ENCODE measurements at regions of chr1 and their contacts with region 1.

Region 1: GRCh38 chr1:186375088-186375953 is at the starts of genes ODR4 and TPR:
- DNase-seq: peak; percentile 100
- H3K4me3 Mint-ChIP-seq: peak within 1 kb of the TSS; percentile 96
- H3K27ac Mint-ChIP-seq: peak within 1 kb of the TSS; percentile 100
- H3K4me1 Mint-ChIP-seq: peaks cover 22% of the 10 kb centered on the region
- H3K27me3 Mint-ChIP-seq: no peaks in the 10 kb centered on the region
- CTCF ChIP-seq: peak; percentile 96
- total RNA-seq, gene ODR4: 36.9 and 39.9 TPM in 2 replicates
- total RNA-seq, gene TPR: 126 and 140 TPM in 2 replicates

Region 2: GRCh38 chr1:186325239-186325638 is 50.1 kb before region 1 on chr1:
- CTCF ChIA-PET with region 1: interaction called, 13 read pairs
- POLR2A ChIA-PET with region 1: interaction called, 5 read pairs
- intact Hi-C with region 1: no loop called
- DNase-seq: peak; percentile 35
- H3K4me3 Mint-ChIP-seq: no peak overlapping the region
- H3K27ac Mint-ChIP-seq: no peak overlapping the region
- H3K4me1 Mint-ChIP-seq: no peaks in the 10 kb centered on the region
- H3K27me3 Mint-ChIP-seq: no peaks in the 10 kb centered on the region
- CTCF ChIP-seq: peak; percentile 47

Region 3: GRCh38 chr1:186330758-186331157 is 44.6 kb before region 1 on chr1:
- CTCF ChIA-PET with region 1: interaction called, 10 read pairs
- POLR2A ChIA-PET with region 1: interaction called, 5 read pairs
- intact Hi-C with region 1: no loop called
- DNase-seq: no peak
- H3K4me3 Mint-ChIP-seq: no peak overlapping the region
- H3K27ac Mint-ChIP-seq: no peak overlapping the region
- H3K4me1 Mint-ChIP-seq: no peaks in the 10 kb centered on the region
- H3K27me3 Mint-ChIP-seq: no peaks in the 10 kb centered on the region
- CTCF ChIP-seq: peak; percentile 39

Region 4: DNA sequence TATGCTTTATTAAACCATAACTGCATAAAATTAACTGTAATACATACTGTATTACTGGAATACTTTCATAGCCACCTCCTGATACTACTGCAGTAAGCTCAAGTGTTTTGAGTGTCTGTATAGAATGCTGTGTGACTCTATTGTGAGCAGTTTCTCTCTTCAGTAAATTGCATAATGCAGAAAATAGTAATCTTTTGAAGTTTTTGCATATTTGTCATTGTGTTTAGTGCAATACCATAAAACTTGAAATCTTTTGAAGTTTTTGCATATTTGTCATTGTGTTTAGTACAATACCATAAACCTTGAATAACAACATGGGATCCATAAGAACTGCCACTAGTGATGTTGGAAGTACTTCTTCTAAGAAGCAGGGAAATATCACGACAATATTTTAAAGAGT is 11.4 kb before region 1 on chr1:
- CTCF ChIA-PET with region 1: interaction called, 26 read pairs
- POLR2A ChIA-PET with region 1: interaction called, 15 read pairs
- intact Hi-C with region 1: no loop called
- DNase-seq: no peak
- H3K4me3 Mint-ChIP-seq: no peak overlapping the region
- H3K27ac Mint-ChIP-seq: no peak overlapping the region
- H3K4me1 Mint-ChIP-seq: peaks cover 5% of the 10 kb centered on the region
- H3K27me3 Mint-ChIP-seq: no peaks in the 10 kb centered on the region
- CTCF ChIP-seq: no peak

Region 5: GRCh38 chr1:186391841-186392240 is 16.5 kb after region 1 on chr1:
- CTCF ChIA-PET with region 1: interaction called, 29 read pairs
- POLR2A ChIA-PET with region 1: interaction called, 13 read pairs
- intact Hi-C with region 1: no loop called
- DNase-seq: no peak
- H3K4me3 Mint-ChIP-seq: no peak overlapping the region
- H3K27ac Mint-ChIP-seq: no peak overlapping the region
- H3K4me1 Mint-ChIP-seq: no peaks in the 10 kb centered on the region
- H3K27me3 Mint-ChIP-seq: no peaks in the 10 kb centered on the region
- CTCF ChIP-seq: no peak

Region 6: GRCh38 chr1:187691439-187691838 is 1316.1 kb after region 1 on chr1:
- CTCF ChIA-PET with region 1: no interaction called
- POLR2A ChIA-PET with region 1: no interaction called
- intact Hi-C with region 1: loop called (anchors 10 kb)
- DNase-seq: peak; percentile 98
- H3K4me3 Mint-ChIP-seq: no peak overlapping the region
- H3K27ac Mint-ChIP-seq: peak overlapping the region; percentile 24
- H3K4me1 Mint-ChIP-seq: peaks cover 54% of the 10 kb centered on the region
- H3K27me3 Mint-ChIP-seq: no peaks in the 10 kb centered on the region
- CTCF ChIP-seq: no peak